ENCODE measurements at regions of chr11 and their contacts with region 1.

Region 1: GRCh38 chr11:61332797-61333549 is at the starts of genes DDB1 and TKFC:
- DNase-seq: peak; percentile 92 to 98 (median 97)
- ATAC-seq: peak; percentile 90
- H3K4me3 ChIP-seq: peak within 1 kb of the TSS; percentile 91
- H3K4me3 Mint-ChIP-seq: peak within 1 kb of the TSS; percentile 96
- H3K27ac ChIP-seq: peak within 1 kb of the TSS; percentile 85 to 87
- H3K27ac Mint-ChIP-seq: peak within 1 kb of the TSS; percentile 95
- H3K4me1 ChIP-seq: peaks cover 54% of the 10 kb centered on the region
- H3K4me1 Mint-ChIP-seq: peaks cover 69% of the 10 kb centered on the region
- H3K27me3 ChIP-seq: no peaks in the 10 kb centered on the region
- H3K27me3 Mint-ChIP-seq: no peaks in the 10 kb centered on the region
- CTCF ChIP-seq: no peak
- total RNA-seq, gene DDB1: 140 to 147 TPM
- total RNA-seq, gene TKFC: 21.8 to 26.3 TPM

Region 2: DNA sequence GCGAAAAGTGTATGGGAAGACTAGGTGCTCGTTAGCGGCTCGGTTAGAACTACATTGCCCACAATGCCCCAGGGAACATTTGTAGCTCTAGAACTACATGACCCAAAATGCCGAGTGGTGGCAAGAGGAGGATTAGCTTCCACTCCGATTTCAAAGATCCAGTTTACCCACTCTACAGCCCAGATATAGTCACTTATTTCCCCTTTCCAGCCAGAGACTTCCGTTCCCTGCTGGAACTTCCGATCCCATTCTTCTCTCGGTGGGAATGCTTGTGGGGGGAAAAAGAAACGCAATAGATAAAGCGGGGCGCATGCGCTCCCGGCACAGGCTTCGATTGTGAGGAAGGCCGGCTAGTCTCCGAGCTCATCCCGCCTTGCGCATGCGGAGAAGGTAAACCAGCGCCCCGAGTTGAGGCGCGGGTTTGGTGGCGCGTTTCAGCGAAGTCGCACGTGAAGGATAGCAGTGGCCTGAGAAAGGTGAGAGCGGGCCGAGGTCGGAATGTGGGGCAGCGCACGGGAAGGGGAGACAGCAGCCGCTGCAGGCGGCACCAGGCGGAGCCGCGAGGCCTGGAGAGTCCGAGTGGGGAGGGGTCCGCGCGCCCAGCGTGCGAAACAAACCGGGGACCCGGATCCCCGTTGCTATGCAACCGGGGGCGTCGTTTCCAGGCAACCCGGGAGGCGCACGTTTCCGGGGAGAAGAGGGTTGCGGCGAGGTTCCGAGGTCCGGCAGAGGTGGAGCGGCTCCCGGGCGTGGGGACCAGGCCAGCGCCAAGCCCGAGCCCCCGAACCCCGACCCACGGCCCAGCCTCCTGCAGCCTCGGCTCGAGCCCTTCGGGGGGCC is 419.0 kb before region 1 on chr11 and contains the start of gene TMEM109:
- CTCF ChIA-PET with region 1: no interaction called
- POLR2A ChIA-PET with region 1: interaction called, 3 read pairs
- intact Hi-C with region 1: loop called in 1 of 2 experiments (anchors 5 kb)
- DNase-seq: peak; percentile 80 to 95 (median 85)
- ATAC-seq: peak; percentile 67
- H3K4me3 ChIP-seq: peak within 1 kb of the TSS; percentile 95
- H3K4me3 Mint-ChIP-seq: peak within 1 kb of the TSS; percentile 98
- H3K27ac ChIP-seq: peak within 1 kb of the TSS; percentile 97 to 98
- H3K27ac Mint-ChIP-seq: peak within 1 kb of the TSS; percentile 92
- H3K4me1 ChIP-seq: peaks cover 68% of the 10 kb centered on the region
- H3K4me1 Mint-ChIP-seq: peaks cover 65% of the 10 kb centered on the region
- H3K27me3 ChIP-seq: no peaks in the 10 kb centered on the region
- H3K27me3 Mint-ChIP-seq: no peaks in the 10 kb centered on the region
- CTCF ChIP-seq: no peak
- total RNA-seq, gene TMEM109: 27.8 to 32.9 TPM

Region 3: GRCh38 chr11:61384271-61385242 is 51.6 kb after region 1 on chr11:
- CTCF ChIA-PET with region 1: interaction called, 173 read pairs
- POLR2A ChIA-PET with region 1: interaction called, 43 read pairs
- intact Hi-C with region 1: loop called (anchors 1 kb)
- DNase-seq: no peak
- ATAC-seq: no peak
- H3K4me3 ChIP-seq: no peak overlapping the region
- H3K4me3 Mint-ChIP-seq: no peak overlapping the region
- H3K27ac ChIP-seq: no peak overlapping the region
- H3K27ac Mint-ChIP-seq: no peak overlapping the region
- H3K4me1 ChIP-seq: peaks cover 6% of the 10 kb centered on the region
- H3K4me1 Mint-ChIP-seq: peaks cover 7% of the 10 kb centered on the region
- H3K27me3 ChIP-seq: no peaks in the 10 kb centered on the region
- H3K27me3 Mint-ChIP-seq: no peaks in the 10 kb centered on the region
- CTCF ChIP-seq: no peak

Region 4: GRCh38 chr11:61401558-61401957 is 68.6 kb after region 1 on chr11:
- CTCF ChIA-PET with region 1: interaction called, 10 read pairs
- POLR2A ChIA-PET with region 1: interaction called, 3 read pairs
- intact Hi-C with region 1: no loop called
- DNase-seq: no peak
- ATAC-seq: no peak
- H3K4me3 ChIP-seq: no peak overlapping the region
- H3K4me3 Mint-ChIP-seq: no peak overlapping the region
- H3K27ac ChIP-seq: no peak overlapping the region
- H3K27ac Mint-ChIP-seq: peak overlapping the region; percentile 79
- H3K4me1 ChIP-seq: no peaks in the 10 kb centered on the region
- H3K4me1 Mint-ChIP-seq: no peaks in the 10 kb centered on the region
- H3K27me3 ChIP-seq: no peaks in the 10 kb centered on the region
- H3K27me3 Mint-ChIP-seq: no peaks in the 10 kb centered on the region
- CTCF ChIP-seq: no peak

Region 5: DNA sequence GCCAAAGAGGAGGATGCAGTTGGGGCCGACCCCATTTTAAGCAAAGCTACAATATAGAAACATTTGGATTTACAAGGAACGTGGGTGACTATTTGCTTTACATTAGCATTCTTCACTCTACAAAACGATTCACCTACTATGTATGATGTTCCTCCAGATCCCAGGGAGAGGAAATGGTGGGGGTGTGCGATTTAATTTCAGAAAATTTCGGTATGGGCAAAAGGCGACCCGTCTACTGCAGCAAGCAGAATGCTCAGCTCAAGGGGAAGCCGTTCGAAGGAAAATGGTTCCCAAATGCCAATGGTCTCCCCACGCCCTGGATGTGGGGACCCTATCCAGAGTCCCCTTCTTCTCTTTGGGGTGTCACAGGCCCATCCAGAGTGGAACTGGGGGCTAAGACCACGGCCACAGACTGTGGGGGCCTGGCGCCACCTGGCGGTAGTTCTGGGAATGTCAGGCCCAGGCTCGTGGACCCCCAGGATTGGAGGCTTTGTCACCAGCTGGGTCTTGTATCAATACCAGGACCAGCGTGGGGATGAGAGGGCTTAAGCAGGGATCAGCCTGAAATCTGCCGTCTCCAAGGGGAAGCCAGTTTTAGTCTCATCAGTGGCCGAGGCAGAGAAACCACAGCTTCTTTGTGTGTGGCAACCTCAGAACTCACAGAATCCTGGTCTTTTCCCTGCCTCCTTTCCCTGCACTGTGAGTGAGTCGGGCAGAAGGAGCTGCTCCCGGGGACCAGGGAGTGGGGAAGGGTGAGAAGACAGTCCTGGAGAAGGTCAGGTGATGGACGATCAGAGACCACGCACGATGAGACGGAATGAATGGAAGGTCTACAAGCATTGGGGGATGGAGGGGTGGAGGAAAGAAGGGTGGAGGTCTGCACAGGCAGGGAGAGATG is 184.0 kb after region 1 on chr11:
- CTCF ChIA-PET with region 1: no interaction called
- POLR2A ChIA-PET with region 1: no interaction called
- intact Hi-C with region 1: loop called in 1 of 2 experiments (anchors 5 kb)
- DNase-seq: peak; percentile 27 to 69 (median 47)
- ATAC-seq: peak; percentile 71
- H3K4me3 ChIP-seq: peak overlapping the region; percentile 2
- H3K4me3 Mint-ChIP-seq: peak overlapping the region; percentile 39
- H3K27ac ChIP-seq: no peak overlapping the region
- H3K27ac Mint-ChIP-seq: no peak overlapping the region
- H3K4me1 ChIP-seq: peaks cover 13% of the 10 kb centered on the region
- H3K4me1 Mint-ChIP-seq: peaks cover 9% of the 10 kb centered on the region
- H3K27me3 ChIP-seq: peaks cover 18% of the 10 kb centered on the region in 2 experiments
- H3K27me3 Mint-ChIP-seq: peaks cover 42% of the 10 kb centered on the region
- CTCF ChIP-seq: peak; percentile 99

Region 6: GRCh38 chr11:62142921-62143320 is 809.9 kb after region 1 on chr11:
- CTCF ChIA-PET with region 1: no interaction called
- POLR2A ChIA-PET with region 1: no interaction called
- intact Hi-C with region 1: no loop called
- DNase-seq: no peak
- ATAC-seq: no peak
- H3K4me3 ChIP-seq: no peak overlapping the region
- H3K4me3 Mint-ChIP-seq: no peak overlapping the region
- H3K27ac ChIP-seq: no peak overlapping the region
- H3K27ac Mint-ChIP-seq: no peak overlapping the region
- H3K4me1 ChIP-seq: no peaks in the 10 kb centered on the region
- H3K4me1 Mint-ChIP-seq: no peaks in the 10 kb centered on the region
- H3K27me3 ChIP-seq: no peaks in the 10 kb centered on the region
- H3K27me3 Mint-ChIP-seq: no peaks in the 10 kb centered on the region
- CTCF ChIP-seq: no peak

Measured in CD4-positive, alpha-beta T cell (primary cell).